ENCODE measurements at regions of chr9 and their contacts with region 1.

Region 1: DNA sequence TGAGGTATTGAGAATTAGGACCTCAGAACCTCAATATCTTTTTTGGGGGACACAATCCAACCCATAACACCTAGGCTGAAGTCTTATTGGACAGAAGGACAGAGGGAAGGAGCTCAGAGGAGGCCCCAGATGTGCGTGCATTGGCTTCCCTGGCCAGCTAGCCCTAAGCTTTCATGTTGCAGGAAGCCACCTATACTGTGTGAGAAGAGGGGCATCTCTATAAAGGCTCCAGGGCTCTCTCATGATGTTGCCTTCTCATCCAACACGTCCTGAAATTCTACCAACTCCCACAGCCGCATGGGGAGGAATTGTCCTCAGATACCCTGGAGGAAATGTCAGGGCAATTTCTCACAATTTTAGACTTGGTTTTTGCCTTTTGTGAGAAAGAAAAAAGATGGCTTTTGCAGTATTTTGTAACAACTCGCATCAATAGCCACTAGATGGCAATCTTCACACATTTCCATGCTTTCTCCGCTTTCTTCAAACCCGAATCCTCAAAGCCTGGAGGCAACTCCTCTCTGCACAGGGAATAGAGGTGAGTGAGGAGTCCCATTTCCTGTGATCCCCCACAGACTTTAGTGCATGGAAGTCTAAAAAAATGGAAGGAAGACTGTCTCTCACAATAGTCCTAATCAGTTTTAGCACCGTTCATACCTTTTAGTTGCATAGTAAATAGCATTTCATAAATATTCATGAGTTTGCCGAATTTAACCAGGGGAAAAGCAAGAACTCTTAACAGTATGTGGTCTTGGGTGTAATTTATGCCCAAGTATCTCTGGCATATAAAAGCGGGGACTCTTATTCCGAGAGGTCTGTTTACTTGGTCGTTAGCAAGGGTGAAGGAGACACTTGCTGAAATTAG is 7.4 kb upstream of the PPP3R2 start:
- DNase-seq: peak in 2 of 10 donors; percentile 11 to 21

Region 2: GRCh38 chr9:101738566-101739183 is 136.5 kb after region 1 on chr9 and contains the start of gene GRIN3A:
- intact Hi-C with region 1: loop called (anchors 10 kb)
- DNase-seq: peak in 9 of 10 donors; percentile 37 to 95 (median 69)